Activated CD4-positive, alpha-beta T cell treated with anti-CD3 and anti-CD28 coated beads for 36 hours (primary cell): ENCODE measurements at regions of chr12 and their contacts with region 1.

Region 1: GRCh38 chr12:57693659-57694458 is at the start of gene OS9:
- DNase-seq: peak; percentile 96
- ATAC-seq: peak; percentile 98
- H3K4me3 Mint-ChIP-seq: no peak within 1 kb of the TSS
- H3K27ac Mint-ChIP-seq: no peak within 1 kb of the TSS
- H3K4me1 Mint-ChIP-seq: peaks cover 4% of the 10 kb centered on the region
- H3K27me3 Mint-ChIP-seq: peaks cover 8% of the 10 kb centered on the region
- total RNA-seq, gene OS9: 61.7 to 63.2 TPM

Region 2: DNA sequence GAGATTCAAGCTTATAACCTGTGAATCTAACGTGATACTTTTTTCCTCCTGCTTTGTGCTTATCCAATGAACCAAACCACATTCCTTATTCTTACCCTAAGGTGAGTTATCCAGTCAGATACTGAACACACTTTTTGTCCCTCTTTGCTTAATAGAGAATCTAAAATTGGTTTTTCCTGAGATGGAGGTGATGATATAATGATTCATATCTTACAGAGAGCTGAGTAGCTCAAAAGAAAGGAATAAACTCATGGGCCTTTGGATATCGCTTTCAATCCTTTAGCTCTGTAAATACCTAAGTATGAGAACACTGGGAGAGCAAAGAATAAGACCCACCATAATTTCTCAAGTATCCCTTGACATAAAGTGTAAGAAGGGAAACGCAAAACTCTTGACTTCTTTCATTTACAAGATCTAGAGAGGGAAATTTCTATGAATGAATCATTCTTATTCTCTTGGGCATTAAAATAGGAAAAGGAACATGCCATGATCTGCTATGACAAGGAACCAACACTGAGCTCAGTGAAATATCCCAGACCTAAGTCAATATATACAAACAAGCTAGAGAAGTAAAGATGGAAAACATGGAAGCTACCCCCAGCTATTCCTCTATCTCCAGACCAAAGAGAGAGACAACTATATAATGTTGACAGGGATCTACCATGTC is 361.1 kb before region 1 on chr12:
- CTCF ChIA-PET with region 1: no interaction called
- POLR2A ChIA-PET with region 1: no interaction called
- intact Hi-C with region 1: no loop called
- DNase-seq: no peak
- ATAC-seq: no peak
- H3K4me3 Mint-ChIP-seq: no peak overlapping the region
- H3K27ac Mint-ChIP-seq: no peak overlapping the region
- H3K4me1 Mint-ChIP-seq: peaks cover 2% of the 10 kb centered on the region
- H3K27me3 Mint-ChIP-seq: no peaks in the 10 kb centered on the region

Region 3: DNA sequence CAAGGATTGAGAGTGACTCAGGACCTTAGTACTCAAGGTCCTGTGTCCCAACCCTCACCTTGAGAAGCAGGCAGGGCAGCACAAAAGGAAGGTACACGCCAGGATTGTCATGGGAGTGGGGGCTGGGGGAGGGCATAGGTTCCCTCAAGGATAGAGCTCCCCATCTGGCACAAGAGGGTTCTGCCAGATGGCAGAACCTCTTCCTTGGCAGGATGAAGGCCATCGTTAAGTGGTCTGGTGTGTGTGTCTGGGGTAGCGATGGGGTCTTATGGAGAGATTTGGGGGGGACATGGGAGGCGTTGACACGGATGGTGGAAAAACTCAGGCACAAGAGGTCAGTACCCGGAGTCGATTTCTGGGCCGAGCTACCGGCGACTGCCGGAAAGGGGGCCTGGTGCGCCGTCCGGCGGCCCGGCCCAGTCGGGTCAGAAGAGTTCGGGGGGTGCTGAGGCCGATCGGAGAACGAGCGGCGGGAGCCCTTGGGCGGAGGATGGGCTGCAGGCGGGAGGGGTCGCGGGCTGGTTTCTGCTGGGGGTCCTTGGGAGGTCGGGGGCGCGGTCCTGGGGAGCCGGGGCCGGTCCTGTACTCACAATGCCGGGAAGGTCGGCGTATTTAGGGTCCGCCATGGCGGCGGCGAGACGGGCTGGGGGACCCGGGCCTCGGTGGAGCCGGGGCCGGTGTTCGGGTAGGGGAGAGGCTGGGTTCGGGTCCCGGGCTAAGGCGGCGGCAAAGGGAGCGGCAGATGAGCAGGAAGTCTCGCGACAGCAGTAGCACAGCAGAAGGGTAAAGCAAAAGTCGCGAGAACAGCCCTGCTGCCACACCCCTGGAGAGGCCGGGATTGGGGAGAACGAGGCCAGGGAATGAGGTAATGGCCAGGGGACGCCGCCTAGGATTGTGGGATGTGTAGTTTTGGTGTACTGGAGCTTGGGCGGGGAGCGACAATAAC is 147.1 kb before region 1 on chr12 and contains the start of gene DCTN2:
- CTCF ChIA-PET with region 1: no interaction called
- POLR2A ChIA-PET with region 1: interaction called, 4 read pairs
- intact Hi-C with region 1: loop called in 1 of 2 experiments (anchors 1 kb)
- DNase-seq: peak; percentile 97
- ATAC-seq: peak; percentile 98
- H3K4me3 Mint-ChIP-seq: peak within 1 kb of the TSS; percentile 99
- H3K27ac Mint-ChIP-seq: peak within 1 kb of the TSS; percentile 99
- H3K4me1 Mint-ChIP-seq: peaks cover 45% of the 10 kb centered on the region
- H3K27me3 Mint-ChIP-seq: peaks cover 13% of the 10 kb centered on the region
- total RNA-seq, gene DCTN2: 69.7 to 81.2 TPM

Region 4: DNA sequence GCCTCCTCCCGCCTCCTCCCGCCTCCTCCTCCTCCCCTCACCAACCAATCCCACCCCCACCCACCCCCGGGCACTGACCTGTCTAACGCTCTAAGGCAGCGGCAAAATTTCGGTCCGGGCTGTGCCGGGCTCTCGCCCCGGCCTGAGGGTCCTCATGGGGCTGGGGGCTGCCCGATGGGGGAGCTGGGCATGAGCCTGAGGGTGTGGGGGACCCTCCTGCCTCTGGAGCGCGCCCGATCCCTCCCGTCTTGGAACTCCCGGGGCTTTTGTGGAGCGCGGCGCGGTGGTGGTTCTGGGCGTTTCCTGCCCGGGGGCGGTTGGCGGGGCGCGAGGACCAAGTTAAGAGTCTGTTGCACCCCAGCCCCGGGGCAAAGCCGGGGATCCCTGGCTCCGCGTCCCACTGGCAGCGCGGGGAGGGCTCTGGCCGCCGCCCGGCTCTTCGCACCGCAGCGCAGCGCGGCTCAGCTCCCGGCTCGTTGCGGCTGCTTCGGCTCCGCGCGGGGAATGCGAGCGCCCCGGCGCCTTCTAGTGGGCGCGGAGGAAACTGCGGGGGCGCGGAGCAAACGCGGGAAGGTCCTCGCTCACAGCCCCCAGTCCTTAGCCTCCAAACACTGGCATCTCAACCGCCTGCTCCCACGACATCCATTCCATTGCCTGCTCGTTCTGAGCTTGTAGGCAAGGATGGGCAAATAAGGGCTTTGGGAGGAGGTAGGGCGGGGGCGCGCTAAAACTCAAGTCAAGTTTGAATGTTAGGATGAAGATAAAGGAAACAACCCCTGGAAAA is 61.0 kb before region 1 on chr12 and contains the start of gene B4GALNT1:
- CTCF ChIA-PET with region 1: interaction called, 7 read pairs
- POLR2A ChIA-PET with region 1: no interaction called
- intact Hi-C with region 1: loop called in 1 of 2 experiments (anchors 5 kb)
- DNase-seq: peak; percentile 81
- ATAC-seq: peak; percentile 86
- H3K4me3 Mint-ChIP-seq: peak within 1 kb of the TSS; percentile 54
- H3K27ac Mint-ChIP-seq: no peak within 1 kb of the TSS
- H3K4me1 Mint-ChIP-seq: peaks cover 7% of the 10 kb centered on the region
- H3K27me3 Mint-ChIP-seq: peaks cover 49% of the 10 kb centered on the region
- total RNA-seq, gene B4GALNT1: 1.4 to 1.5 TPM

Region 5: GRCh38 chr12:57712701-57713100 is 18.8 kb after region 1 on chr12:
- CTCF ChIA-PET with region 1: no interaction called
- POLR2A ChIA-PET with region 1: no interaction called
- intact Hi-C with region 1: no loop called
- DNase-seq: no peak
- ATAC-seq: no peak
- H3K4me3 Mint-ChIP-seq: no peak overlapping the region
- H3K27ac Mint-ChIP-seq: no peak overlapping the region
- H3K4me1 Mint-ChIP-seq: no peaks in the 10 kb centered on the region
- H3K27me3 Mint-ChIP-seq: no peaks in the 10 kb centered on the region

Region 6: GRCh38 chr12:57941165-57941894 is 247.5 kb after region 1 on chr12 and contains the start of gene ATP23:
- CTCF ChIA-PET with region 1: no interaction called
- POLR2A ChIA-PET with region 1: no interaction called
- intact Hi-C with region 1: loop called in 1 of 2 experiments (anchors 2 kb)
- DNase-seq: peak; percentile 94
- ATAC-seq: peak; percentile 90
- H3K4me3 Mint-ChIP-seq: peak within 1 kb of the TSS; percentile 77
- H3K27ac Mint-ChIP-seq: peak within 1 kb of the TSS; percentile 90
- H3K4me1 Mint-ChIP-seq: peaks cover 43% of the 10 kb centered on the region
- H3K27me3 Mint-ChIP-seq: no peaks in the 10 kb centered on the region
- total RNA-seq, gene ATP23: 17.8 to 17.9 TPM